H1 (cell line): ENCODE measurements at regions of chr2 and their contacts with region 1.

Region 1: GRCh38 chr2:185628985-185629384 is 109.6 kb upstream of the FSIP2 start:
- DNase-seq: peak; percentile 54 to 84
- H3K4me3 ChIP-seq: no peak overlapping the region
- H3K27ac ChIP-seq: no peak overlapping the region
- H3K4me1 ChIP-seq: peaks cover 0 to 3% (median 0%) of the 10 kb centered on the region in 4 experiments; a peak in 1 of 7 replicates
- H3K27me3 ChIP-seq: no peaks in the 10 kb centered on the region
- CTCF ChIP-seq: peak; percentile 19 to 67 (median 61)
- EP300 ChIP-seq: no peak
- POLR2A ChIP-seq: no peak
- RAD21 ChIP-seq: peak; percentile 45 to 59

Region 2: GRCh38 chr2:185618625-185619024 is 10.4 kb before region 1 on chr2:
- CTCF ChIA-PET with region 1: interaction called, 14 read pairs
- POLR2A ChIA-PET with region 1: no interaction called
- DNase-seq: no peak
- H3K4me3 ChIP-seq: no peak overlapping the region
- H3K27ac ChIP-seq: no peak overlapping the region
- H3K4me1 ChIP-seq: no peaks in the 10 kb centered on the region
- H3K27me3 ChIP-seq: no peaks in the 10 kb centered on the region
- CTCF ChIP-seq: peak in 1 of 3 experiments; percentile 18; a peak in 1 of 4 replicates
- EP300 ChIP-seq: no peak
- POLR2A ChIP-seq: no peak
- RAD21 ChIP-seq: no peak; a peak in 2 of 4 replicates

Region 3: GRCh38 chr2:185689906-185690539 is 61.0 kb after region 1 on chr2:
- CTCF ChIA-PET with region 1: no interaction called
- POLR2A ChIA-PET with region 1: no interaction called
- DNase-seq: no peak
- H3K4me3 ChIP-seq: no peak overlapping the region
- H3K27ac ChIP-seq: no peak overlapping the region
- H3K4me1 ChIP-seq: no peaks in the 10 kb centered on the region
- H3K27me3 ChIP-seq: no peaks in the 10 kb centered on the region
- CTCF ChIP-seq: no peak
- EP300 ChIP-seq: no peak
- POLR2A ChIP-seq: no peak
- RAD21 ChIP-seq: no peak

Region 4: GRCh38 chr2:185785851-185786473 is 157.0 kb after region 1 on chr2:
- CTCF ChIA-PET with region 1: no interaction called
- POLR2A ChIA-PET with region 1: no interaction called
- DNase-seq: no peak
- H3K4me3 ChIP-seq: no peak overlapping the region
- H3K27ac ChIP-seq: no peak overlapping the region
- H3K4me1 ChIP-seq: no peaks in the 10 kb centered on the region
- H3K27me3 ChIP-seq: no peaks in the 10 kb centered on the region
- CTCF ChIP-seq: no peak
- EP300 ChIP-seq: no peak
- POLR2A ChIP-seq: no peak
- RAD21 ChIP-seq: no peak